MCF 10A (cell line): ENCODE measurements at regions of chr17 and their contacts with region 1.

Region 1: GRCh38 chr17:39687811-39688518 is at the start of gene PGAP3:
- DNase-seq: peak; percentile 92
- H3K4me3 Mint-ChIP-seq: peak within 1 kb of the TSS; percentile 79
- H3K27ac Mint-ChIP-seq: peak within 1 kb of the TSS; percentile 95
- H3K4me1 Mint-ChIP-seq: peaks cover 14% of the 10 kb centered on the region
- H3K27me3 Mint-ChIP-seq: no peaks in the 10 kb centered on the region
- CTCF ChIP-seq: no peak
- total RNA-seq, gene PGAP3: 10.0 and 13.2 TPM in 2 replicates

Region 2: GRCh38 chr17:39636927-39637736 is 50.8 kb before region 1 on chr17 and contains the start of gene STARD3:
- CTCF ChIA-PET with region 1: no interaction called
- POLR2A ChIA-PET with region 1: interaction called, 11 read pairs
- intact Hi-C with region 1: loop called (anchors 5 kb)
- DNase-seq: peak; percentile 82
- H3K4me3 Mint-ChIP-seq: peak within 1 kb of the TSS; percentile 93
- H3K27ac Mint-ChIP-seq: peak within 1 kb of the TSS; percentile 97
- H3K4me1 Mint-ChIP-seq: peaks cover 20% of the 10 kb centered on the region
- H3K27me3 Mint-ChIP-seq: peaks cover 3% of the 10 kb centered on the region
- CTCF ChIP-seq: peak; percentile 9
- total RNA-seq, gene STARD3: 30.1 and 31.1 TPM in 2 replicates

Region 3: GRCh38 chr17:39730095-39730921 is 42.3 kb after region 1 on chr17 and contains the start of gene MIEN1:
- CTCF ChIA-PET with region 1: interaction called, 4 read pairs
- POLR2A ChIA-PET with region 1: interaction called, 13 read pairs
- intact Hi-C with region 1: no loop called
- DNase-seq: peak; percentile 82
- H3K4me3 Mint-ChIP-seq: peak within 1 kb of the TSS; percentile 78
- H3K27ac Mint-ChIP-seq: peak within 1 kb of the TSS; percentile 73
- H3K4me1 Mint-ChIP-seq: peaks cover 10% of the 10 kb centered on the region
- H3K27me3 Mint-ChIP-seq: no peaks in the 10 kb centered on the region
- CTCF ChIP-seq: peak; percentile 78
- total RNA-seq, gene MIEN1: 42.1 and 51.3 TPM in 2 replicates

Region 4: GRCh38 chr17:39738931-39739884 is 51.2 kb after region 1 on chr17:
- CTCF ChIA-PET with region 1: interaction called, 3 read pairs
- POLR2A ChIA-PET with region 1: interaction called, 11 read pairs
- intact Hi-C with region 1: loop called (anchors 5 kb)
- DNase-seq: peak; percentile 90
- H3K4me3 Mint-ChIP-seq: peak overlapping the region; percentile 81
- H3K27ac Mint-ChIP-seq: peak overlapping the region; percentile 95
- H3K4me1 Mint-ChIP-seq: peaks cover 45% of the 10 kb centered on the region
- H3K27me3 Mint-ChIP-seq: peaks cover 11% of the 10 kb centered on the region
- CTCF ChIP-seq: no peak